Psoas muscle (tissue), 8 donors: ENCODE measurements at regions of chr17 and their contacts with region 1.

Region 1: DNA sequence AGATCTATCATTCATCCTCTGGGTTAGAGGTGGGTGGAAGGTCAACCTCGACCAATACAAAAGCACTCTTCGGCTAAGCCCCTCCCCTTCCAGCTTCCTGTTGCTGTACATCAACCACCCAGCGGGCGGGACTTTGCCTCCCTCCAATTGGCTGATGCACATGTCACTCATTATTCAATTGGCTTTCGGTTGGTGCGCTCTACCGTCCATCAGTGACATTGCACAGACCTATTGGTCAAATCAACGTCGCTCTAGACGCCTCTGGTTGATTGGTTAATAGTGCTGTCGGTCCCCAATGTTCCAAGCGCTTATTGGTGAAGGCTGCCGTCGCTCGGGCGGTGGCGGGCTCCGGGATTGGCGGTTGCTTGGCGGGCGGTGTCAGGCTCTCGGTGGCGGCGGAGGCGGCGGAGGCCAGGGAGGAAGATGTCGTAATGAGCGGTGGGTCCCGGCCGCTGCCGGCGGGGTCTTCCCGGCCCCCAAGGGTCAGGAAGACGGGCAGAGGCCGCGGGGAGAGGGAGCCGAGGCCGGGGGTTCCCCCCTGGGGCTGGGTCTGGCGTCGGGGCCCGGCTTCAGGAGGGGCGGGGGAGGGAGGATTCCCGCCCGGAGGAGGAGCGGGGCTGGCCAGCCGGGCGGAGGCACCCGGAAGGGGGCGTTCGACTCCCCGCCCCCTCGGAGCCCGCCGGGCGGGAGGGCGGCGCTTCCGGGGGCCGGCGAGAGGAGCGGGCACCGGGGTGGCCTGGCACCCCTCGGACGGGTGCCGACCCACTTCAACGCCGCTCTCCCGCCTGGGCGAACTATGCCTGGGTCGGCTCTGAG is at the start of gene SP2:
- DNase-seq: peak; percentile 99
- ATAC-seq: peak; percentile 90 to 94 (median 92)
- H3K4me3 ChIP-seq: peak within 1 kb of the TSS; percentile 82
- H3K27ac ChIP-seq: peak within 1 kb of the TSS; percentile 97
- H3K4me1 ChIP-seq: peaks cover 51% of the 10 kb centered on the region
- H3K27me3 ChIP-seq: no peaks in the 10 kb centered on the region
- CTCF ChIP-seq: peak; percentile 7
- total RNA-seq, gene SP2: 10.8 to 16.1 (median 12.8) TPM

Region 2: DNA sequence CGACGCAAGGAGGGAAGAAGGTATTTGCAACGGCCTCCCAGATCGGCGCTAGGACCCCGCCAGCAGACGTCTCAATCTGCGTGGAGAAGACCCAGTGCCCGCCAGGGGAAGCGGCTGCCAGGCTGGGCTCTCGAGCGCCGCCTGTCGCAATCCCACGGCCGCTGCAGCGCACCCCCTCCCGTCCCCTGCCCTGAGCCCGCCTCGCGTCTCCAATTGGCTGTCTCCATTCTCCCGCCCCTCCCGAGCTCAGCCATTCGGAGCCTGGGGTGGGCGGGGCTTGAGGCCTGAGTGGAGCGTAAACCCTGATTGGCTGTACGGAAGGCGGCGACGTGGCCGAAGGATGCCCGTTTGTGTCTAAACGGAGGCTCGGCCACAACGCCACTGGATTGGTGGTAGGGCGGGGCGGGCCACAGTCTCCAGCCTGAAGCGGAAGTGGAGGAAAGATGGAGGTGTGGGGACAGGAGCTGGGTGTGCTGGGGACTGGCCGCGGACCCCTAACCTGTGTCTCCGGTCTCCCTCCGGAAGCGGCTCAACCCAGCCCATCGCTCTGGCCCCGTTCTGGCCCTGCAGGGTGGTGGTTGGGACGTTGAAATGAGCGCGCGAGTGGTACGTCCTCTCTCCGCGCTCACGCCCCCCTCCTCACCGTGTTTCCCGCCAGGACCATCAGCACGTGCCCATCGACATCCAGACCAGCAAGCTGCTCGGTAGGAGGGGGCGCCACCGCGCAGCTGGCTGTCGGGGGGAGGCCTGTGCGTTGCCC is 74.8 kb after region 1 on chr17 and contains the start of gene CDK5RAP3:
- intact Hi-C with region 1: loop called in 1 of 2 experiments (anchors 1 kb)
- DNase-seq: peak; percentile 100
- ATAC-seq: peak; percentile 99 to 100 (median 100)
- H3K4me3 ChIP-seq: peak within 1 kb of the TSS; percentile 95
- H3K27ac ChIP-seq: peak within 1 kb of the TSS; percentile 93
- H3K4me1 ChIP-seq: no peaks in the 10 kb centered on the region
- H3K27me3 ChIP-seq: no peaks in the 10 kb centered on the region
- CTCF ChIP-seq: peak; percentile 90
- total RNA-seq, gene CDK5RAP3: 21.0 to 44.1 (median 34.5) TPM

Region 3: GRCh38 chr17:48011405-48012150 is 115.5 kb after region 1 on chr17:
- intact Hi-C with region 1: no loop called
- DNase-seq: peak in 1 of 2 donors; percentile 63
- ATAC-seq: peak in 3 of 4 donors; percentile 49 to 86 (median 72)
- H3K4me3 ChIP-seq: peak overlapping the region; percentile 56
- H3K27ac ChIP-seq: no peak overlapping the region
- H3K4me1 ChIP-seq: peaks cover 8% of the 10 kb centered on the region
- H3K27me3 ChIP-seq: peaks cover 0 to 58% (median 8%) of the 10 kb centered on the region in 3 donors
- CTCF ChIP-seq: peak; percentile 32

Region 4: DNA sequence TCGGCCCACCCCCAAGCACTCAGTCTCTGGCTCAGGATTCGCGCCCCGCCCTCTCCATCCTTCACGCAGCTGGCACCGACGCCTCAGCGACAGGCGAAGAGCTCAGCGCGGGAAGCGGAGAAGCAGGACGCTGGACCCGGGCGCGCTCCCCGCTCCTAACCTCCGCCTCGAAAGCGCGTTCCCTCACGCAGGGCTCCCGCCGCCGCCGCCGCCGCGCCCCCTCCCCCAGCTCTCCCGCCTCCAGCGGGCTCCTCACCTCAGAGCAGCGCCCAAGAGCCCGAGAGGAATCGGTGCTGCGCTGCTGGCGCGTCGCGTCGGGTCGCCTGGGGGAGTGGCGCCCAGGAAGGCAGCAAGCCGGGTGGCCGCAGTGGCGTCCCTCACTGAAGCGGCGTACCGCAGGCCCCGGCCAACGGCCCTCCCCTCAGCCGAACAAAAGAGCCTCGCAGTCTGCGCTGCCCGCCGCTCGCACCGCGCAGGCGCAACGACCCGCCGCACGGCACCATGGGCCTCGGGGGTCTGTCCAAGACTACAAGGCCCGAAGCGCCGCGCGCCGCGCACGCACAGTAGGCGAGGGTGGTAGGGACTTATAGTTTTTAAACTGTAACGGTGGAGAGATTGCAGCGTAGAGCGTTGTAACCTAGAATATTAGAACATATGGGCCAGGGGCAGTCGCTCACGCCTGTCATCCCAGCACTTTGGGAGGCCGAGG is 205.1 kb after region 1 on chr17 and contains the start of gene CBX1:
- intact Hi-C with region 1: no loop called
- DNase-seq: peak; percentile 95 to 96
- ATAC-seq: peak; percentile 98 to 99 (median 99)
- H3K4me3 ChIP-seq: peak within 1 kb of the TSS; percentile 99
- H3K27ac ChIP-seq: peak within 1 kb of the TSS; percentile 86
- H3K4me1 ChIP-seq: peaks cover 8% of the 10 kb centered on the region
- H3K27me3 ChIP-seq: no peaks in the 10 kb centered on the region
- CTCF ChIP-seq: no peak
- total RNA-seq, gene CBX1: 28.9 to 39.6 (median 35.5) TPM